ENCODE measurements at regions of chr3 and their contacts with region 1.

Region 1: GRCh38 chr3:25033407-25034029 is 394.5 kb upstream of the RARB start:
- DNase-seq: peak; percentile 30
- ATAC-seq: no peak
- H3K4me3 Mint-ChIP-seq: no peak overlapping the region
- H3K27ac Mint-ChIP-seq: no peak overlapping the region
- H3K4me1 Mint-ChIP-seq: no peaks in the 10 kb centered on the region
- H3K27me3 Mint-ChIP-seq: no peaks in the 10 kb centered on the region
- CTCF ChIP-seq: peak; percentile 41

Region 2: DNA sequence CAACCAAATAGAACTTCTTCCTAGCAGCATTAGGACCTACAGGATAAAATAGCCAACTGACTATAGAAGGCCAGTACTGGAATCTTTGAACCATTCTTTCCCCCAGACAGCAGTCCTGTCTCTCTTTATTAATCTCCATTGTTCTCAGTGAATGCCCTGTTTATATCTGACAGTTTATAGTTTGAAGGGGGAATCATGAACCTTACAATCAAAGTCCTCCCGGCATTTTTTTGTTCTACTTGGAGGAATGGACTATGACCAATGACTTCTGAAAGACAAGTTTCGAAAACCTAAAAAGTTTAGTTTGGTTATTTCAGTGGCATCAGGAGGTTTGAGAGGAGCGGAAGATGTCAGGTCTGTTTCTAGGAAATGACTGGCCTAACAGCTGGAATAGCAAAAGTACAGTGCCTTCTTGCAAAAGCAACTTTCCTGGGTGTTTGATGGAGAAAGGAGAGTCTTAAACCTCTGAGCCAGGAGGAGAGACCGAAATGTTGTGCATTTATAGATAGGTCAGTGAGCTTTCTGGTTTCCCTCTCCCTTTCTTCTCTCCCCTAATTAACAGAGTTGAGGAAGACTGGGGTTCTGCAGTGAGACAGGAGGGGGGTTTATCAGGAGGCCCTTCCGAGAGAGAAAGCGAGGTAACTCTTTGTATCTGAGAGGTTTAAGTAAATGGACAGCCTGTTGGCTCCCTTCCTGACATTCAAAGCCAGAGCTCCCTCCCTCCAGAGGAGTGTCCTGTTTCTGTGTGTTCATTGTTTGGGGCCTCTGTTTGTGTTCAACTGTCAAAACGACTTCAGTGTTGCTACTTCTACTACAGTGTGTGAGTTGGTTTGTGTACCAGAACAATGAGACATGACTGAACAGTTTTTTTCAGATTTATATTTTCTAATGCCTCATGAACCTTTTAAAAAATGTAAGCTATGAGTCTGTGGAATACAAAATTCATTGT is 11.5 kb after region 1 on chr3:
- CTCF ChIA-PET with region 1: interaction called, 10 read pairs
- POLR2A ChIA-PET with region 1: no interaction called
- intact Hi-C with region 1: no loop called
- DNase-seq: no peak
- ATAC-seq: no peak
- H3K4me3 Mint-ChIP-seq: no peak overlapping the region
- H3K27ac Mint-ChIP-seq: no peak overlapping the region
- H3K4me1 Mint-ChIP-seq: no peaks in the 10 kb centered on the region
- H3K27me3 Mint-ChIP-seq: no peaks in the 10 kb centered on the region
- CTCF ChIP-seq: no peak

Measured in activated CD8-positive, alpha-beta T cell treated with anti-CD3 and anti-CD28 coated beads for 36 hours (primary cell).